Activated CD4-positive, alpha-beta memory T cell treated with anti-CD3 and anti-CD28 coated beads for 36 hours (primary cell): ENCODE measurements at regions of chr2 and their contacts with region 1.

Region 1: GRCh38 chr2:207625018-207625907 is at the start of gene METTL21A:
- DNase-seq: peak; percentile 96
- H3K4me3 Mint-ChIP-seq: peak within 1 kb of the TSS; percentile 87
- H3K27ac Mint-ChIP-seq: peak within 1 kb of the TSS; percentile 96
- H3K4me1 Mint-ChIP-seq: peaks cover 48% of the 10 kb centered on the region
- H3K27me3 Mint-ChIP-seq: no peaks in the 10 kb centered on the region
- total RNA-seq, gene METTL21A: 21.2 to 22.9 TPM

Region 2: DNA sequence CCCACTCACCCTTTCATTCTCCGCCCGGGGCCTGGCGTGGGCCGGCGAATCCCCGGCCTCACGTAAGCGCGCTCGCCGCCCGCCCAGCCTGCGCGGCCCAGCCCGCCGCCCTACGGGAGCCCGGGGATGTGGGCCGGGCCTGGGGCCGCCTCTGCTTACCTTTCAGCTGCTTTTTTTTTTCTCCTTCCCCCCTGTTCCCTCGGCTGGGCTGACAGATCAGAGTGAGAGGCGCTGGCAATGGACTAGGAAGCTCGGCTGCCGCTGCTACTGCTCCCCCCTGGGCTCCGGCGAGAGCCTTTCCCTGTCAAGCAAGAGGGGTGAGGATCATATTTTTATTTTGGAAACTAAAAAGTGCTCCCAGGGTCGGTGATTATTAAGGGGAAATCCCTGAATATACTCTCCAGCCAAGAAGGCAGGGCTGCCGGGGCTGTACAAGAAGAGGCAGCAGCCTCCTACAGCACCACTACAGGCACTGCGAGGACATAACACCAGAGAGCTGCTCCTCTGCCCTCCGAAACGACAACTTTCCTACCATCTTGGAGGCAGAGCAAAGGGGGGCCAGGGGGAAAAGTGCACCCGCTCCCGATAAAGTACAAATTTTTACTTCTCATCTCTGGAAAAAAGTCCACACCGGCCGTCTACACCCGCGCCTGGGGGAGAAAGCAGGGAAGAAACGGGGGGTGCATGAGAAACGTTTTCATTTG is 1539.4 kb before region 1 on chr2 and contains the start of gene INO80D:
- CTCF ChIA-PET with region 1: no interaction called
- POLR2A ChIA-PET with region 1: no interaction called
- intact Hi-C with region 1: loop called (anchors 10 kb)
- DNase-seq: peak; percentile 87
- H3K4me3 Mint-ChIP-seq: peak within 1 kb of the TSS; percentile 99
- H3K27ac Mint-ChIP-seq: peak within 1 kb of the TSS; percentile 100
- H3K4me1 Mint-ChIP-seq: peaks cover 14% of the 10 kb centered on the region
- H3K27me3 Mint-ChIP-seq: no peaks in the 10 kb centered on the region
- total RNA-seq, gene INO80D: 14.5 to 15.3 TPM

Region 3: GRCh38 chr2:207487650-207488311 is 137.5 kb before region 1 on chr2:
- CTCF ChIA-PET with region 1: no interaction called
- POLR2A ChIA-PET with region 1: no interaction called
- intact Hi-C with region 1: no loop called
- DNase-seq: no peak
- H3K4me3 Mint-ChIP-seq: no peak overlapping the region
- H3K27ac Mint-ChIP-seq: no peak overlapping the region
- H3K4me1 Mint-ChIP-seq: no peaks in the 10 kb centered on the region
- H3K27me3 Mint-ChIP-seq: no peaks in the 10 kb centered on the region

Region 4: DNA sequence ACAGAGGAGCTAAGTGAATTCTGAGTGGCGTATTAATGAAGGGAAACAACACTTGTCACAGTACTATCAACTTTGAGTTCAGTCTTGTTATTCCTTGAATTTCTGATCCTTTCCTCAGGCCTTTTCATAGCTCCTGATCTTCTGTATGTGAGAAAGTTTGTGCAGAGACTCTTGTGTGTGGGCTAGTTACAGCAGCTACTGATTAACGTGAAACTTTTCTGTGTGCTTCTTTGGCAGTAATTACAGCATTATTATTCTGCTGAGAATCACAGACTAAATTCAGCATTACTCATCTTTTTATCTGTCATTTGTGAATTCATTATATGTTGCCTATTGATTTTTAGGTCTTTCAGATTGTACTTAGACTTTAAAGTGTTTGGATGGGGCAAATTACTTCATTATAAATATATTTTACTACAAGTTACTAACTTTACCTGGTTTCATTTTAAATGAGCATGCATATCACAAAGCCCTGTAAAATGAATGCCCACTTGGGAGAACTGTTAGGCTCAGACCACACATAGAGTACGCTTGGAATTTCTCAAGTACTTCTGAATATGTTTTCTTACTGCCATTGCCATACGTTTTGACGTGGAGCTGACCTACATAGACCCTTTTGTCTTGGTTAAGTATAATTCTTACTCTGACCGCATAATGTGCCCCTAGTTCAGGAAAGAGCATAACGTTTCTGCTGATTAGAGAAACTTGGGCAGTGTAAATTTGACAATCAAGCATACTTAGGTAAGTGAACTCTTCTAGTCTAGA is 59.3 kb before region 1 on chr2:
- CTCF ChIA-PET with region 1: no interaction called
- POLR2A ChIA-PET with region 1: no interaction called
- intact Hi-C with region 1: no loop called
- DNase-seq: no peak
- H3K4me3 Mint-ChIP-seq: no peak overlapping the region
- H3K27ac Mint-ChIP-seq: no peak overlapping the region
- H3K4me1 Mint-ChIP-seq: peaks cover 22% of the 10 kb centered on the region
- H3K27me3 Mint-ChIP-seq: no peaks in the 10 kb centered on the region

Region 5: DNA sequence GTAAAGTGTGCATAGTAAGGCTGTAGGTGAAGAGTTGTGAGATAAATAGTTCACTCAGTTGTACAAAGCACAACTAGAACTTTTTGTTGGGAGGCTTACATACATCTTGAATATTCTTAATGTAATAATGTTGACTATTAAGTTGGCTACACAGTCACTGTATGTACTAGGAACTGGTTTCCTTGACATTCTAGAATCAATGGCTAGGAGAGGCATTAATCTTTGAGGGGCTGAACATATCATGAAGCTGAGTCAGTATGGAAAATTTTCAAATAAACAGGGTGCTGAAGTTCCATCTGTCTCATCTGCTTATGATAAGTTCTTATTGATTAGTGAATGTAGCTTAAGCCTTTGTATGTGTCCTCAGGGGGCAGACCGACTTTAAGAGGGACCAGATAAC is 23.5 kb before region 1 on chr2:
- CTCF ChIA-PET with region 1: no interaction called
- POLR2A ChIA-PET with region 1: no interaction called
- intact Hi-C with region 1: loop called (anchors 2 kb)
- DNase-seq: no peak
- H3K4me3 Mint-ChIP-seq: no peak overlapping the region
- H3K27ac Mint-ChIP-seq: no peak overlapping the region
- H3K4me1 Mint-ChIP-seq: peaks cover 12% of the 10 kb centered on the region
- H3K27me3 Mint-ChIP-seq: no peaks in the 10 kb centered on the region

Region 6: GRCh38 chr2:207692206-207693065 is 67.2 kb after region 1 on chr2:
- CTCF ChIA-PET with region 1: interaction called, 10 read pairs
- POLR2A ChIA-PET with region 1: interaction called, 4 read pairs
- intact Hi-C with region 1: no loop called
- DNase-seq: peak; percentile 54
- H3K4me3 Mint-ChIP-seq: no peak overlapping the region
- H3K27ac Mint-ChIP-seq: no peak overlapping the region
- H3K4me1 Mint-ChIP-seq: peaks cover 7% of the 10 kb centered on the region
- H3K27me3 Mint-ChIP-seq: peaks cover 1% of the 10 kb centered on the region

Region 7: DNA sequence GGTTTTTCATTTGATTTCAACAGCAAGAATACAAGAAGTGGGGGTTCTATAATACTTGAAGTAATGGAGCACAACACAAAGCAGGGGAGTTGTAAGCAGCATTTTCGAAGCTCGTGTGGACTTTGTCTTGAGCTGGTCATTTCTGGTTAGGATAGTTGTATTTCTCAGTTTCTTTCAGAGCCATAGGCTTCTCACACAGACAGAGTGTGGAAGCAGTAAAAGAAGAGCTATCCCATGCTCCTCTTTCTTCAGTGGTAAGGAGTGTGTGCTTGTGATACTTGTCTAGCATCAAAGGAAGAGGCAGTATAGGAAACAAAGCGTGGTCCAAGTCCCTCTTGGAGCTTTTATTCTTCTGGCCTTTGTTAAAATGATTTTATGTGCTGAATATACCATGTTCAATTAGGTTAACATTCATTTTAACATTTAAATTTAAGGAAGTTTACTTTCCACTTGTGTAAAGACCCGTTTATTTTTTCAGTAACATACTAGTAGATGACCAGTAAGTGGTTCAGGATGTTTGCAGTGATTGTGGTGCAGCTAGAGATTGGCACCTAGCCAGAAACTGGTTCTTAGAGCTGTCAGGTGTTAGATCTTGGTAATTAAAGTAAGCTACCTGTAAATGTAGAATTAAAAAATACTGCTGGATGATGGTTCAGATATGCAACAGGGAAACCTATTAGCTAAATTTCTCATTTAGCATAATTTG is 100.8 kb after region 1 on chr2:
- CTCF ChIA-PET with region 1: interaction called, 15 read pairs
- POLR2A ChIA-PET with region 1: no interaction called
- intact Hi-C with region 1: no loop called
- DNase-seq: no peak
- H3K4me3 Mint-ChIP-seq: no peak overlapping the region
- H3K27ac Mint-ChIP-seq: no peak overlapping the region
- H3K4me1 Mint-ChIP-seq: peaks cover 37% of the 10 kb centered on the region
- H3K27me3 Mint-ChIP-seq: no peaks in the 10 kb centered on the region

Region 8: GRCh38 chr2:207847807-207848544 is 222.7 kb after region 1 on chr2:
- CTCF ChIA-PET with region 1: no interaction called
- POLR2A ChIA-PET with region 1: no interaction called
- intact Hi-C with region 1: no loop called
- DNase-seq: no peak
- H3K4me3 Mint-ChIP-seq: no peak overlapping the region
- H3K27ac Mint-ChIP-seq: no peak overlapping the region
- H3K4me1 Mint-ChIP-seq: no peaks in the 10 kb centered on the region
- H3K27me3 Mint-ChIP-seq: no peaks in the 10 kb centered on the region

Region 9: DNA sequence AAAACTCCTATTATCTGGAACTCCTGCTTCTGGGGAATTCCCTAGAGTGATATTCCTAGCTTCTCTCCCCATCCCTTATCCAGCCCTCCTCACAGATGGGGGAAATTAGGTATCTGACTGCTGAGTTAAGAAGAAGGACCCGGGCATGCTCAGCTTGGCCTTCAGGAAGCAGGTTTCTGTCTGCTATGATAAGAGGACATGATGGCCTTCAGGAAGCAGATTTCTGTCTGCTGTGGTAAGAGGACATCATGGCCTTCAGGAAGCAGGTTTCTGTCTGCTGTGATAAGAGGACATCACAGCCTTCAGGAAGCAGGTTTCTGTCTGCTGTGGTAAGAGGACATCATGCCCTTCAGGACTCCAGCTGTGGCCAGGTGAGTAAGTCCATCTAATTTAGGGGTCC is 334.8 kb after region 1 on chr2:
- CTCF ChIA-PET with region 1: no interaction called
- POLR2A ChIA-PET with region 1: no interaction called
- intact Hi-C with region 1: no loop called
- DNase-seq: no peak
- H3K4me3 Mint-ChIP-seq: no peak overlapping the region
- H3K27ac Mint-ChIP-seq: no peak overlapping the region
- H3K4me1 Mint-ChIP-seq: no peaks in the 10 kb centered on the region
- H3K27me3 Mint-ChIP-seq: no peaks in the 10 kb centered on the region

Region 10: DNA sequence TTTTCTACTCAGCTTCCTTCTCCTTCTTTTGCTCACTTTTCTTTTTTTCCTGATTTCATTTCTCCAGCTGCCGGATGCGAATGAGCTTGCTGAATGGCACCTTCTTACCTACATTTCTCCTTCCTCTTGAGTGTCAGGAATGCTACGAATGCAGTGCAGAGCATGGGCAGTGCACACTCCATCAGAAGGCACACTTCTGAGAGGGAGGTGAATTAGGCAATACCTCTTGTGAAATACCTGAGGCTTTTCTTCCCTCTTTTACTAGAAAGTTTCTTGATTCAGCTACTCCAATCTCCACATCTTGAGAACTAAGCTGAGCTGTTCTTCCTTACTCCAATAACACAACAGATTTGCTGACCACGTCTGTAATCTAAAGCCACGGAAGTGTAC is 348.9 kb after region 1 on chr2:
- CTCF ChIA-PET with region 1: interaction called, 5 read pairs
- POLR2A ChIA-PET with region 1: no interaction called
- intact Hi-C with region 1: loop called (anchors 2 kb)
- DNase-seq: no peak
- H3K4me3 Mint-ChIP-seq: no peak overlapping the region
- H3K27ac Mint-ChIP-seq: no peak overlapping the region
- H3K4me1 Mint-ChIP-seq: peaks cover 9% of the 10 kb centered on the region
- H3K27me3 Mint-ChIP-seq: no peaks in the 10 kb centered on the region

Region 11: GRCh38 chr2:208040199-208041171 is 415.2 kb after region 1 on chr2:
- CTCF ChIA-PET with region 1: interaction called, 27 read pairs
- POLR2A ChIA-PET with region 1: interaction called, 4 read pairs
- intact Hi-C with region 1: loop called (anchors 1 kb)
- DNase-seq: peak; percentile 88
- H3K4me3 Mint-ChIP-seq: no peak overlapping the region
- H3K27ac Mint-ChIP-seq: no peak overlapping the region
- H3K4me1 Mint-ChIP-seq: peaks cover 4% of the 10 kb centered on the region
- H3K27me3 Mint-ChIP-seq: peaks cover 5% of the 10 kb centered on the region